Calu3 (cell line): ENCODE measurements at regions of chr1 and their contacts with region 1.

Region 1: DNA sequence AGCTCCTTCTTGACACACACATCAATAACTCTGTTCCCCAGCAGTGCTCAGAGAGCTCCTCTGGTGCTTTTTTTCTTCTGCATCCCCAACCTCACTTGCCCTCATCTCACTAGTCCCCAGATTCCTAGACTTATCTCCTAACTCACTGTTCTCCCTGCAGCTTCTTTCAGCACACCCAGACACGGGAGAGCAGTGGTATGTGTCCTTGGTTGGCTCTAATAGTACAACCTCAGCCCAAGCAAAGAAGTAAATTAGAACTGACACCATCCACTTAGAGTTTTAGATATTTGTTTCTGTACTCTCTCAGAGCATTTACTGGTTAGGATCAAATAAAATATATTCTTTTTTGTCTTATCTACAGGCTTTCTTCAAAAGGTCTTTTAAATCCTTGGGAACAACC is 201.4 kb upstream of the SNX7 start:
- DNase-seq: peak; percentile 0
- H3K4me3 Mint-ChIP-seq: no peak overlapping the region
- H3K27ac Mint-ChIP-seq: no peak overlapping the region
- H3K4me1 Mint-ChIP-seq: peaks cover 37% of the 10 kb centered on the region
- H3K27me3 Mint-ChIP-seq: no peaks in the 10 kb centered on the region
- CTCF ChIP-seq: no peak

Region 2: DNA sequence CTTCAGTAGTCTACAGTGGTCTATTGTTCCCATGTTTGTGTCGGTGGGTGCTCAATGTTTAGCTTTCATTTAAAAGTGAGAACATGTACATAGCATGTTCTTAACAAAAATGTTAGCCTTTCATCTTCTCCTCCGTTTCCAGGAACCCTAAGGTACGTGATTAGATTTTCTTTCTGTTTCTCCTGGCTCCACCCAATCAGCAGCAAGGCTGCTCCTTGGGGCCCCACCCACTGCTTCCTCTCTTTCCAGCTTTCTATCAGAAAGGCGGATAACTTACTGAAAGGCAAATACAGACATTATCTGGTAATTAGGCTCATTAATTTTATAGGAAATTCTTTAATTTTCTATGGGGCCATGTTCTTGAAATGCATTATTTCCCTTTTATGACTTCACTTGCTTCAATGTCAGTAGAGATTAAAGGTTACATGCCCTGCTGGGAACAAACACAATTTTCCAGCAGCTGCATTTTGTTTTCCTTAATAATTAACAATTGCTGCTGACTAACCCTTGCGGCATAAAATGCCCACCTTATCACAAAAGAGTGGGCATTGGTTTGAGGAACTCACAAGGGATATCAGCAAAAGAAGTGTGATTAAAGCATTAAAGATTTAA is 123.6 kb before region 1 on chr1:
- CTCF ChIA-PET with region 1: no interaction called
- intact Hi-C with region 1: loop called (anchors 5 kb)
- DNase-seq: peak; percentile 55
- H3K4me3 Mint-ChIP-seq: peak overlapping the region; percentile 60
- H3K27ac Mint-ChIP-seq: peak overlapping the region; percentile 79
- H3K4me1 Mint-ChIP-seq: peaks cover 17% of the 10 kb centered on the region
- H3K27me3 Mint-ChIP-seq: no peaks in the 10 kb centered on the region
- CTCF ChIP-seq: no peak